ENCODE measurements at regions of chr3 and their contacts with region 1.

Region 1: GRCh38 chr3:182258538-182259177 is 534.6 kb upstream of the ATP11B start:
- DNase-seq: no peak

Region 2: GRCh38 chr3:181709537-181710279 is 549.0 kb before region 1 on chr3:
- intact Hi-C with region 1: loop called (anchors 2 kb)
- DNase-seq: peak; percentile 71 to 95 (median 82)

Region 3: GRCh38 chr3:182136088-182136487 is 122.6 kb before region 1 on chr3:
- intact Hi-C with region 1: no loop called
- DNase-seq: no peak

Region 4: DNA sequence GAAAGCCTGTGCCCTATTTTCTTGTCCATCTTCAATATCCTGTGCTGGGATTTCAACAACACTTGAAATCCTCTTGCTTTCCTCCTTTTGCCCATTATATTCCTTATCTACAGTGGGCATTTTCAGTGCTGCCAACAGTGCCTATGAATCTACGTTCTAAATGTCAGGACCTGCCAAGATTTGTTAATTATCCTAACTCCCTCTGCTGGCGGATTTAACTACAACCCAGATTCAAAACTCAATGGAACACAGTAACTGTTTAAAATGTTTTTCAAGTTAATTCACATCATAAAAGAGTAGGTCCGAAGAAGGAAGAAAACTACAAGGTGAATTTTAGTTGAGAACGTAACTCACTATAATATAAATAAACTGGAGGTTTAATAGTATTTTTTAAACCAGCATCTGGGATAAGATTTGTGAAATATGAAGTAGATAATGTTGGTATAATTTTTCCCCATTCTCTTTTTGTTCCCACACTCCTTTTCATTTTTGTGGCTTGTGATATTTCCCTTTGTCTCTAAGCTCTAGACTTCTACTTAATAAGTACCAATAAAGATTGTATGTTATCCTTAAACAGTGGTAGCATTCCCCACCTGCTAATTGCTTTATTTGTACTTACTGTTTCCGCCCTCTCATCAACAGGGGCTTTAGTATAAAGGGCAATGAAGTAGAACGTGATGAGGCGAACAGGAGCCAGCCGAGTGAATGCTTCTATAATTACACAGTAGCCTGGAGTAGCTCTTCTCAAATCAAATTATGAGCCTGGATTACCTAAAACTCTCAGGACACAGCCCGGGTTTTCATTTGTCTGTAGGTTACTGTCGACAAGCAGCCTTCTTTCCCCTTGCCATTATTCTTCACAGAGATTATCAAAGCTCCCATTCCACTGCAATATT is 232.2 kb after region 1 on chr3:
- intact Hi-C with region 1: loop called (anchors 10 kb)
- DNase-seq: peak in 1 of 10 donors; percentile 23

Region 5: GRCh38 chr3:182683453-182683852 is 424.8 kb after region 1 on chr3:
- intact Hi-C with region 1: loop called (anchors 5 kb)
- DNase-seq: peak in 8 of 10 donors; percentile 36 to 92 (median 75)